AG04449 (cell line): ENCODE measurements at regions of chr21 and their contacts with region 1.

Region 1: GRCh38 chr21:34510148-34511142 is 1.6 kb downstream of the KCNE1 start:
- DNase-seq: no peak
- H3K4me3 ChIP-seq: no peak overlapping the region
- CTCF ChIP-seq: peak; percentile 98

Region 2: GRCh38 chr21:34367321-34367935 is 143.0 kb before region 1 on chr21:
- CTCF ChIA-PET with region 1: interaction called, 14 read pairs
- POLR2A ChIA-PET with region 1: no interaction called
- DNase-seq: peak; percentile 60
- H3K4me3 ChIP-seq: no peak overlapping the region
- CTCF ChIP-seq: peak; percentile 66

Region 3: DNA sequence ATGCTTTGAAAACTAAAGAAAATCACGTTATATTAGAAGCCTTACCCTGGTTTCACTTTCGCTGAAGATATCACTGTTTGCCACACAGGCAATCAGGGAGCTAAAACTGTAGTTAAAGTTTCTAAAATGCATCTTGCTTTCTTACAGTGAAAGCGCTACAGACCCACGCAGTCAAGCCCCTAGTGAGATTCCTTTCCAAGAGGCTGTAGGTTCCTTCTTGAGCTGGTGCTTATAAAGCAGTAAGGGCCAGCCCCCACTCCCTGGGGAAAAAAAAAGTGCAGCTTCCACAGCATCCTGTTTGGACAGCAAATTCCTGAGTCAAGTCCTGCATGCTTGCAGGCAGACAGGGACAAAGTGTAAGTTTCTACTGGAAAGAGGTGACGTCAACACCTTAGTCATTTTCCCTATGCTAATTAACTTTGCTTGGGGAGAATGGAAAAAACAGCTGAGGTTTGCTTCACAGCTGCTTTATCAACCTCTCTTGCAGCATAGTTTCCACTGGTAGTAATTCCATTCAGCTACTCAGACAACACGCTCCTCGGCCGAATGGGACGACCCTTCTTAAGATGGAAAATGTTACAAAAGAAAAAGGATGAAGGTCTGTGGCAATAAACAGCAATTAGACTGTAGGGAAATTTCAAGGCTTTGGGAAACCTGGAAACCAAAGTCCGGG is 16.3 kb after region 1 on chr21:
- CTCF ChIA-PET with region 1: interaction called, 17 read pairs
- POLR2A ChIA-PET with region 1: interaction called, 6 read pairs
- DNase-seq: peak; percentile 100
- H3K4me3 ChIP-seq: peak overlapping the region; percentile 67
- CTCF ChIP-seq: no peak

Region 4: GRCh38 chr21:34592120-34592955 is 81.9 kb after region 1 on chr21:
- CTCF ChIA-PET with region 1: interaction called, 24 read pairs
- POLR2A ChIA-PET with region 1: no interaction called
- DNase-seq: no peak
- H3K4me3 ChIP-seq: no peak overlapping the region
- CTCF ChIP-seq: no peak

Region 5: GRCh38 chr21:34614633-34615486 is 104.4 kb after region 1 on chr21 and contains the start of gene RCAN1:
- CTCF ChIA-PET with region 1: interaction called, 46 read pairs
- POLR2A ChIA-PET with region 1: no interaction called
- DNase-seq: peak; percentile 51
- H3K4me3 ChIP-seq: peak within 1 kb of the TSS; percentile 71
- CTCF ChIP-seq: no peak

Region 6: DNA sequence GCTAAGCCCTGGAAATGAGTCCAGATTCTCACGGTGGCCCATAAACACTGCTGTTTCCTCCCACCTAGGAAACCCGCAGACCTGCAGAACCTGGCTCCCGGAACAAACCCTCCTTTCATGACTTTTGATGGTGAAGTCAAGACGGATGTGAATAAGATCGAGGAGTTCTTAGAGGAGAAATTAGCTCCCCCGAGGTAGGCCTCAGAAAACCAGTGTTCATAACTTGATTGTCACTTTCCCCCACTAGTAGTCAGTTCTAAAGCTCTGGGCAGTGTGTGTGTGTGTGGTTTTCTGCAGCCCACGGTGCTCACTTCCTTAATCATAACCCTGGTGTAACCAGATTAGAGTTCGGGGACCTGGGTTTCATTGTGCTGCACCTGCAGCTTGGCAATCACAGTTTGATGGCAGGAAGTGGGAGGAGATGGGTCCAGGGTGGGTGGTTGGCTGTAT is 197.5 kb after region 1 on chr21:
- CTCF ChIA-PET with region 1: no interaction called
- POLR2A ChIA-PET with region 1: no interaction called
- DNase-seq: no peak
- H3K4me3 ChIP-seq: no peak overlapping the region
- CTCF ChIP-seq: no peak